ENCODE measurements at regions of chr17 and their contacts with region 1.

Region 1: DNA sequence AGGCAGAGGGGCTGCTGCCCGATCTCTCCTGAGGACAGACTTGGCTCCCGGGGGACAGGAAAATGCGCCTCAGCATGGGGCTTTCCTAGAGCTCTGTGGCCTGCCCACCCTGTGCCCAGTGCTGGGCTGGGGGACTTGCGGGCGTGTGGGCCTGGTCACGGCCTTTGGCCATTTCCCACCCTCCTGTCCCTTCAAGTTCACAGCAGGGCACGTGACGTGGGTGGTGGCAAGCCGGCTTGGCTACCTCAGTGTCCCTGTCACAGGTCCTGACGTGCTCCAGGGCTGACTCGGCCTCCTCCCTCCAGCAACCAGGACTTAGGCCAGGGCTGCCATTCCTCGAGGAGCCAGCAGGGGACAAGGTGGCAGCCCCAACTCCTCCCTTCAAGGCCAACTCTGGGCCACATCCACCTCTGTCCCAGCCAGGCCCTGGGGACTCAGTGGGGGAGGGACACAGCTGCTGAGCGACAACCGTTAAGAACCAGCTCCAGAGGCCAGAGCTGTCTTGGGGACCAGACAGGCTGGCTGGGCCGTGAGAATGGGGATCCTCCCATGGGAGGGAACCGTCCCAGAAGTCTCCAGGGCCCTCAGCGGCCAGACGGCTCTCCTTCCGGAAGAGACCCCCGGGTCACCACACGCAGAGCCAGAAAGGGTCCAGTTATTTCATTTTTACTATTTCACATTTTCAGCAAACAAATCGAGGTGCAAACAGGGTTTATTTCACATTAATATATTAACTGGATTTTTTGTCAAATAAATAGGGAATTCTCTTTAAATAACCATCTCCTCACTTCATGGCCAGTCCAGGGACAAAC is 1.1 kb upstream of the UNC13D start:
- DNase-seq: peak; percentile 89 to 93
- H3K4me3 ChIP-seq: peak overlapping the region; percentile 40; the same call in 1 of the 2 replicates
- H3K27ac ChIP-seq: peak overlapping the region; percentile 96
- H3K4me1 ChIP-seq: peaks cover 51% of the 10 kb centered on the region
- H3K27me3 ChIP-seq: no peaks in the 10 kb centered on the region
- CTCF ChIP-seq: peak; percentile 92

Region 2: GRCh38 chr17:75154195-75155106 is 690.8 kb before region 1 on chr17 and contains the start of gene JPT1:
- CTCF ChIA-PET with region 1: no interaction called
- POLR2A ChIA-PET with region 1: no interaction called
- intact Hi-C with region 1: no loop called
- DNase-seq: peak; percentile 97 to 98
- H3K4me3 ChIP-seq: peak within 1 kb of the TSS; percentile 81
- H3K27ac ChIP-seq: peak within 1 kb of the TSS; percentile 14; the same call in 1 of the 2 replicates
- H3K4me1 ChIP-seq: peaks cover 42% of the 10 kb centered on the region
- H3K27me3 ChIP-seq: no peaks in the 10 kb centered on the region
- CTCF ChIP-seq: no peak
- total RNA-seq, gene JPT1: 250 and 277 TPM in 2 replicates

Region 3: DNA sequence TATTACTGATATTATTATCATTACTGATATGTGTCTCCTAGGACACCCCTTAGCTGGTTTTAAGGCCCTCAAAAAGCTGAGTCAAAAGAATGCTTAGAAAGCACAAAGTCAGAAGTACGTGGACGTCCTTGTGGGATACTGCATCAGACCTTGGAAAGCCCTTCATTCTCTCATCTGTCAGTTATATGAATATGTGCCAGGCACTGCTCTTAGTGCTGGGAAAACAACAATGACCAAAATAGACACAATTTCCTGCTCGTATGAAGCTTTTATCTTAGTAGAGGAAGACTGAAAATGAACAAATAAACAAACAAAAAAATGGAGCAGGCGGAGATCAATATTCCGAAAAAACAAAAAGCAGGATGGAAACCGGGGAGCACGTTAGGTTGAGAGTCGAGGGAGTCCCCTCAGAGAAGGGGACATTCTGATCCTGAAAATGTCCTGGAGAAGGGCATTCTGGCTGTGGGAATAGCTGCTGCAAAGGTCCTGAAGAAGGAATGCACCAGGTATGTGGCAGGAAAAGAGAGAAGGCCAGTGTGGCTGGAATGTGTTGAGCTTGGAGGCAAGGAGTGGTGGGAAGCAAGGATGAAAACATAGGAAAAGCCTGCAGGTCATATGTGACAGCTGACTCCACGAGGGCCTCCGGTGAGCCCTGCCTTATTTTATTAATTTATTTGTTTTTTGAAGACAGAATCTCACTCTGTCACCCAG is 404.4 kb before region 1 on chr17:
- CTCF ChIA-PET with region 1: no interaction called
- POLR2A ChIA-PET with region 1: interaction called, 11 read pairs
- intact Hi-C with region 1: no loop called
- DNase-seq: no peak
- H3K4me3 ChIP-seq: no peak overlapping the region
- H3K27ac ChIP-seq: no peak overlapping the region
- H3K4me1 ChIP-seq: peaks cover 15% of the 10 kb centered on the region
- H3K27me3 ChIP-seq: no peaks in the 10 kb centered on the region
- CTCF ChIP-seq: no peak

Region 4: GRCh38 chr17:75504347-75504964 is 340.8 kb before region 1 on chr17:
- CTCF ChIA-PET with region 1: no interaction called
- POLR2A ChIA-PET with region 1: no interaction called
- intact Hi-C with region 1: no loop called
- DNase-seq: peak in 1 of 2 experiments; percentile 54
- H3K4me3 ChIP-seq: no peak overlapping the region
- H3K27ac ChIP-seq: no peak overlapping the region
- H3K4me1 ChIP-seq: no peaks in the 10 kb centered on the region
- H3K27me3 ChIP-seq: no peaks in the 10 kb centered on the region
- CTCF ChIP-seq: peak; percentile 77

Region 5: GRCh38 chr17:75639771-75640316 is 205.4 kb before region 1 on chr17:
- CTCF ChIA-PET with region 1: no interaction called
- POLR2A ChIA-PET with region 1: no interaction called
- intact Hi-C with region 1: no loop called
- DNase-seq: peak; percentile 76 to 83
- H3K4me3 ChIP-seq: no peak overlapping the region
- H3K27ac ChIP-seq: no peak overlapping the region
- H3K4me1 ChIP-seq: peaks cover 43% of the 10 kb centered on the region
- H3K27me3 ChIP-seq: no peaks in the 10 kb centered on the region
- CTCF ChIP-seq: peak; percentile 56

Region 6: GRCh38 chr17:75784473-75785015 is 60.7 kb before region 1 on chr17 and contains the start of gene UNK:
- CTCF ChIA-PET with region 1: no interaction called
- POLR2A ChIA-PET with region 1: interaction called, 19 read pairs
- intact Hi-C with region 1: loop called (anchors 1 kb)
- DNase-seq: peak; percentile 96
- H3K4me3 ChIP-seq: peak within 1 kb of the TSS; percentile 72
- H3K27ac ChIP-seq: peak within 1 kb of the TSS; percentile 94
- H3K4me1 ChIP-seq: peaks cover 52% of the 10 kb centered on the region
- H3K27me3 ChIP-seq: no peaks in the 10 kb centered on the region
- CTCF ChIP-seq: no peak
- total RNA-seq, gene UNK: 25.3 and 27.8 TPM in 2 replicates

Region 7: GRCh38 chr17:75855310-75856081 is 10.2 kb after region 1 on chr17 and contains the start of gene WBP2:
- CTCF ChIA-PET with region 1: interaction called, 17 read pairs
- POLR2A ChIA-PET with region 1: interaction called, 24 read pairs
- intact Hi-C with region 1: loop called (anchors 1 kb)
- DNase-seq: peak; percentile 96 to 100
- H3K4me3 ChIP-seq: peak within 1 kb of the TSS; percentile 74
- H3K27ac ChIP-seq: peak within 1 kb of the TSS; percentile 79
- H3K4me1 ChIP-seq: peaks cover 23% of the 10 kb centered on the region
- H3K27me3 ChIP-seq: no peaks in the 10 kb centered on the region
- CTCF ChIP-seq: peak; percentile 52
- total RNA-seq, gene WBP2: 114 and 159 TPM in 2 replicates

Region 8: GRCh38 chr17:75877752-75878173 is 32.5 kb after region 1 on chr17:
- CTCF ChIA-PET with region 1: interaction called, 7 read pairs
- POLR2A ChIA-PET with region 1: interaction called, 16 read pairs
- intact Hi-C with region 1: loop called (anchors 1 kb)
- DNase-seq: peak; percentile 66 to 74
- H3K4me3 ChIP-seq: peak overlapping the region; percentile 96
- H3K27ac ChIP-seq: peak overlapping the region; percentile 87
- H3K4me1 ChIP-seq: peaks cover 35% of the 10 kb centered on the region
- H3K27me3 ChIP-seq: no peaks in the 10 kb centered on the region
- CTCF ChIP-seq: no peak

Region 9: GRCh38 chr17:75978938-75979704 is 133.9 kb after region 1 on chr17 and contains the starts of genes ACOX1 and TEN1:
- CTCF ChIA-PET with region 1: no interaction called
- POLR2A ChIA-PET with region 1: no interaction called
- intact Hi-C with region 1: loop called (anchors 5 kb)
- DNase-seq: peak; percentile 91 to 96
- H3K4me3 ChIP-seq: peak within 1 kb of the TSS; percentile 82
- H3K27ac ChIP-seq: peak within 1 kb of the TSS; percentile 87
- H3K4me1 ChIP-seq: peaks cover 63% of the 10 kb centered on the region
- H3K27me3 ChIP-seq: no peaks in the 10 kb centered on the region
- CTCF ChIP-seq: peak; percentile 21; the same call in 1 of the 2 replicates
- total RNA-seq, gene ACOX1: 35.5 and 37.1 TPM in 2 replicates
- total RNA-seq, gene TEN1: 19.6 and 22.7 TPM in 2 replicates